Left cardiac atrium (tissue), 4 donors: ENCODE measurements at regions of chr15 and their contacts with region 1.

Region 1: DNA sequence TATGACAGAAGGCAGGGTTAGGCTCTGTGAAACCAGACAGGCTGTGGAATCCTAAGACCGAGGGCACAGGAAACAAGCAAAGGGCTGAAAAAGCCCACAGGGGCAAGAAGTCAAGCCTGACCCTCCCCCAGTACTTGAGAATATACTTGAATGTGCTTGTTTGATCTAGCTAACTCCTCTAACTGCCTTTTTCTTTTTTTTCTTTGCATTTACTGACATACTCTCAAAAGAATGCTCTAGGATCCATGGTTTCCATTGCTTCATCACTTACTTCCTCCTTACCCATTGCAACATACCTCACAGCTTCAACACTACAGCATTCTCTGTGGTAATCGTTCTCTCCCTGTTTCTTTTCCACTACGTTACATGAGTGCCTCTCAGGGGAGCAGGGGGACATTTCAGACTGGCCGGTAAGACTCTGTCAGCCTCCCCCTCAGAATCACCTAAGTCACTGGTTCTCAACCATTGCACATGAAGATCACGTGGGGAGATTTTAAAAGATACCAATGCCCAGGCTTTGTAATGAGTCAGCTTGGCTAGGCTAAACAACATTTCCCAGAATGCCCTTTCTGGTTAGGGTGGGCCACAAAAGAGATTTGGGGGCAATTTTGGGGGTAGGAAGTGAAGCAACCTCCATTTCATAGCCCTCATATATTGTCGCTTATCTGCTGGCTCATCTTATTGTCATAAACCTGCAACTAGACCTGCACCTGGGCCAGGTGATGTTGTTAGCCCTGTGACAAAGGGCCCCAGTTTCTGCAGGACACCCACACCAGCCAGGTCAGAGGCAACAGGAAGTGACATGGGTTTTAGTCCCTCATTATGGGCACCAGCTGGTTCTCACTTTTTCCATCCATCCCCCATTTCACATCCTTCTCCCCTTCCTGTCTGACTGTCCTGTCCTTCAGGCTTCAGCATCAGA is 24.6 kb upstream of the RSL24D1 start:
- DNase-seq: no peak
- ATAC-seq: peak; percentile 86 to 91

Region 2: DNA sequence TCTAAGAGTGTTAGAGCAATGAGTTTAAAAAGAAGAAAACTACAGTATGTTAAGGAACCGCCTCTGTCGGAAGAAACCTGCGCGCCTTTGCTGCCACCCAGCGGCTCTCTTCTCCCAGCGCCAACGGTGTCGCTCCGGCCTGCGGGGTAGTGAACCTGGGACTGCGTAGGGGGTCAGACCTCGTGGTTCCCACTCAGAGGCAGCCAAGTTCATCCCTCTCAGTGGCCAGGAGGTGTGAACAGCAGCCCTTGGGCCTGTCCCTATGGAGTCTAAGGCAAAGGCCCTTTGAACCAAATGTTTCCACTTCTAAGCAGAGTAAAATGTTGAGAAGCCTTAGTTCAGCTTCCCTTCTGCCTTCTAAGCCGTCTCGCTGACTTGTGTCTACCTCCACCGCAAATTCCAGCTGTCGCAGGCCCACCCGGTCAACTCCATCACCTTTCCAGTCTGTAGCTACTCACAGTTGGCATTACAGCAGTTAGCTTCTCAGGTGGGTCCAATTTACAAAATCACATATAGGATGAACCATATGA is 69.2 kb after region 1 on chr15:
- intact Hi-C with region 1: loop called (anchors 1 to 5 kb)
- DNase-seq: peak; percentile 89
- ATAC-seq: peak; percentile 94

Region 3: GRCh38 chr15:55394694-55395093 is 173.3 kb after region 1 on chr15:
- intact Hi-C with region 1: no loop called
- DNase-seq: no peak
- ATAC-seq: no peak

Region 4: GRCh38 chr15:55434989-55435825 is 213.9 kb after region 1 on chr15:
- intact Hi-C with region 1: loop called in 1 of 2 experiments (anchors 5 kb)
- DNase-seq: no peak
- ATAC-seq: peak in 1 of 2 donors; percentile 57